Tibial artery (tissue), 4 donors: ENCODE measurements at regions of chr10 and their contacts with region 1.

Region 1: DNA sequence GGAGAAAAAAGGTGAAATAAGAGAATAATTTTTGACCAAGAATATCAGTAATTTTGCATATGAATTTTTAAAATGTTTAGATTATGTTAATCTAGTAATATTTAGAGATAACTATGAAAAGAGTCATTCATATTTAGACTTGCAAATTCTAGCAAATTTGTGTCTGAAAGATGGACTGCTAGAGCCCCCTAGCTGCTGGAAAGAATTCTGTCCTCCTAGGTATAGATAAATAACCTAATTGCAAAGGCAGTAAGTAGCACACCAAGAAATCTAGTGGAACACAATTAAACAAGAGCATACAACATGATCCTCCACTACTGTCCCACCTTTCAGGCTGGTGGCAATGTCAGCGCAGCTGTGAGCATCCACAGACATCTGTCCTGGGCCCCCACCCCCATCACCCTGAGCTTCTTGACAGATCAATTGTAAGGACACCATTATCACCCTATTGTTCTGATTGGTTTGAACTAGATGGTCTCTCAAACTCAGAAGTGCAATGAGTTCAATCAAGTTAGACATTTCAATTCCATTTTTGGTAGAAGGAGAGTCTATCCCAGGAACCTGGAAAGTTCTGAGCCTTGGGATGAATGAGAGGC is 15.0 kb upstream of the GFRA1 start:
- DNase-seq: no peak
- H3K4me3 ChIP-seq: no peak overlapping the region
- H3K27ac ChIP-seq: no peak overlapping the region
- H3K4me1 ChIP-seq: no peaks in the 10 kb centered on the region
- H3K27me3 ChIP-seq: peaks cover 0 to 13% of the 10 kb centered on the region in 2 donors
- CTCF ChIP-seq: peak; percentile 70 to 77

Region 2: GRCh38 chr10:115706026-115706781 is 581.8 kb before region 1 on chr10:
- intact Hi-C with region 1: loop called (anchors 10 kb)
- DNase-seq: no peak
- H3K4me3 ChIP-seq: no peak overlapping the region
- H3K27ac ChIP-seq: no peak overlapping the region
- H3K4me1 ChIP-seq: peaks cover 0 to 7% (median 0%) of the 10 kb centered on the region in 4 donors
- H3K27me3 ChIP-seq: no peaks in the 10 kb centered on the region
- CTCF ChIP-seq: peak; percentile 41 to 60

Region 3: DNA sequence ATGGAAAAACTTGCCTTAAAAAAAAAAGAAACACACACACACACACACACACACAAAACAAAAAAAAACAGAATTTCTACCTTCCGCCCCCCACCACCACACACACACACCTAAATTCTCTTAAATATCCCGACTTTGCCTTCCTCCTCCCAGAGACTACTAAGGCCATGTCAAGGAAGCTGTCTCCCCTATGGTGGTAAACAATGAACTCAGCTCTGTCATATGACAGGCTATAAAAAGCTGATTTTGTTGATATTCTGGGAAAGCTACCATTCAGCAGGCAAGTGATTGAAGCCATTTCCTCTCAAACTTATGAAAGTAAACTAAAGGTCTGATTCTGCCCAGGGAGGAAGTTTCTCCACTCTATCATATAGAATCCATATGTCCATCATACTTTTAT is 486.0 kb before region 1 on chr10:
- intact Hi-C with region 1: loop called (anchors 10 kb)
- DNase-seq: no peak
- H3K4me3 ChIP-seq: no peak overlapping the region
- H3K27ac ChIP-seq: no peak overlapping the region
- H3K4me1 ChIP-seq: no peaks in the 10 kb centered on the region
- H3K27me3 ChIP-seq: no peaks in the 10 kb centered on the region
- CTCF ChIP-seq: no peak

Region 4: DNA sequence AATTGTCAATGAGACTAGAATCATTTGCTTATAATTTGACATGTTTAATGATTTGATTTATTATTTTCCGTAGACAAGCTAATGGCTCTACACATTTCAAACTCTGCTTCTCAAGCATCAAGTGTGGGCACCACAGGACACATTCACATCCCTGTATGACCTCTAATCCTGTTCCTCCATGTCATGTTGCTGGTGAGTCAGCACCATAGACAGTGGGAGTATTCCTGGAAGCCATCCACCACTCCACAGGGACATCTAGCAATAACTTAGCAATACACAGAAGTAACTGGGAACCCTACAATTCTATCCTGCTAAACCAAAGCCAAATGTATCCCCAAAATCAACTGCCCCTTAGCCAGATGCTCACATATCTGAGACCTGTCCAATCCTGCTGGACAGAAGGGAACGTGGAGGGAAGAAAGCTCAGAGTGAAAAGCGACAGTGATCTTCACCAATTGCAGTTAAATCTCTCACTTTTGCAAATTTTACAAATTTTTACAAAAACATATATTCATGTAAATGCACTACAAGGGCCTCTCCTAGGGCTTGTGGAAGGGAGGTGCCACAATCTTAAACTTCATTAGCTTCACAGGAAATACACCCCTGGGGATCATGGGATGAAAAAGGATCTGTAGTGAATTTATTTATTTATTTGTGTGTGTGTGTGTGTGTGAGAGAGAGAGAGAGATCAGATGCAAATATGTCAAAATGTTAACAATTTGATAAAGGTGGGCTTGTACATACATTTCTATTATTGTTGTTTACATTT is 141.4 kb before region 1 on chr10:
- intact Hi-C with region 1: no loop called
- DNase-seq: no peak
- H3K4me3 ChIP-seq: no peak overlapping the region
- H3K27ac ChIP-seq: no peak overlapping the region
- H3K4me1 ChIP-seq: peaks cover 0 to 7% (median 3%) of the 10 kb centered on the region in 4 donors
- H3K27me3 ChIP-seq: no peaks in the 10 kb centered on the region
- CTCF ChIP-seq: no peak

Region 5: GRCh38 chr10:116353817-116354216 is 65.8 kb after region 1 on chr10:
- intact Hi-C with region 1: no loop called
- DNase-seq: no peak
- H3K4me3 ChIP-seq: no peak overlapping the region
- H3K27ac ChIP-seq: no peak overlapping the region
- H3K4me1 ChIP-seq: no peaks in the 10 kb centered on the region
- H3K27me3 ChIP-seq: no peaks in the 10 kb centered on the region
- CTCF ChIP-seq: no peak